Heart right ventricle (tissue), 16 donors: ENCODE measurements at regions of chr6 and their contacts with region 1.

Region 1: GRCh38 chr6:159874435-159874834 is 16.4 kb upstream of the MAS1 start:
- DNase-seq: peak; percentile 59 to 69
- ATAC-seq: peak; percentile 17 to 65 (median 56)
- H3K4me3 ChIP-seq: no peak overlapping the region
- H3K27ac ChIP-seq: no peak overlapping the region
- H3K4me1 ChIP-seq: peaks cover 0 to 10% (median 6%) of the 10 kb centered on the region in 9 donors
- H3K27me3 ChIP-seq: no peaks in the 10 kb centered on the region
- CTCF ChIP-seq: no peak

Region 2: DNA sequence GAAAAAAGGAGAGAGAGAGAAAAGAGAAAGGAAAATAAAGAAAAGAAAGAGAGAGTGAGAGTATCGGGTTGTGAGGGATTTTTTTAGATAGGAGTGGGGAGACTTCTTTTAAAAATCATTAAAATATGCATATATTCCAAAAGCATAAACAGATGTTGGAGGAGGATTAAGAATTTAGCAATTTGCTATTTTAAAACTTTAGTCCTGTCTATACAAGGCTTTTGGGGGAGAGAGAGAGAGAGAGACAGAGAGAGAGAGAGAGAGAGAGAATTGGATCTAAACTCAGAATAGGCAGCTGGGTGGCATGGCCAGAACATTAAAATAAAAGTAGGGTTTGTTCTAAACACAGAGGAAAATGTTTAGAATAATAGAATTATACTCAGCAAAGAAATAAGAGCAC is 253.5 kb before region 1 on chr6:
- intact Hi-C with region 1: no loop called
- DNase-seq: no peak
- ATAC-seq: no peak
- H3K4me3 ChIP-seq: no peak overlapping the region
- H3K27ac ChIP-seq: no peak overlapping the region
- H3K4me1 ChIP-seq: no peaks in the 10 kb centered on the region
- H3K27me3 ChIP-seq: no peaks in the 10 kb centered on the region
- CTCF ChIP-seq: no peak

Region 3: GRCh38 chr6:159929819-159930218 is 55.4 kb after region 1 on chr6:
- intact Hi-C with region 1: loop called in 3 of 10 experiments (anchors 5 kb)
- DNase-seq: peak in 1 of 2 donors; percentile 36
- ATAC-seq: peak in 1 of 8 donors; percentile 42
- H3K4me3 ChIP-seq: no peak overlapping the region
- H3K27ac ChIP-seq: no peak overlapping the region
- H3K4me1 ChIP-seq: peaks cover 0 to 23% (median 7%) of the 10 kb centered on the region in 9 donors
- H3K27me3 ChIP-seq: no peaks in the 10 kb centered on the region
- CTCF ChIP-seq: no peak

Region 4: GRCh38 chr6:160000280-160000704 is 125.9 kb after region 1 on chr6:
- intact Hi-C with region 1: no loop called
- DNase-seq: no peak
- ATAC-seq: no peak
- H3K4me3 ChIP-seq: no peak overlapping the region
- H3K27ac ChIP-seq: no peak overlapping the region
- H3K4me1 ChIP-seq: peaks cover 0 to 35% (median 11%) of the 10 kb centered on the region in 9 donors
- H3K27me3 ChIP-seq: no peaks in the 10 kb centered on the region
- CTCF ChIP-seq: no peak

Region 5: GRCh38 chr6:160071800-160072690 is 197.6 kb after region 1 on chr6:
- intact Hi-C with region 1: loop called in 2 of 10 experiments (anchors 10 kb)
- DNase-seq: no peak
- ATAC-seq: peak in 3 of 8 donors; percentile 21 to 26 (median 24)
- H3K4me3 ChIP-seq: no peak overlapping the region
- H3K27ac ChIP-seq: no peak overlapping the region
- H3K4me1 ChIP-seq: no peaks in the 10 kb centered on the region
- H3K27me3 ChIP-seq: no peaks in the 10 kb centered on the region
- CTCF ChIP-seq: peak in 5 of 9 donors; percentile 15 to 31 (median 24)